ENCODE measurements at regions of chr13 and their contacts with region 1.

Region 1: DNA sequence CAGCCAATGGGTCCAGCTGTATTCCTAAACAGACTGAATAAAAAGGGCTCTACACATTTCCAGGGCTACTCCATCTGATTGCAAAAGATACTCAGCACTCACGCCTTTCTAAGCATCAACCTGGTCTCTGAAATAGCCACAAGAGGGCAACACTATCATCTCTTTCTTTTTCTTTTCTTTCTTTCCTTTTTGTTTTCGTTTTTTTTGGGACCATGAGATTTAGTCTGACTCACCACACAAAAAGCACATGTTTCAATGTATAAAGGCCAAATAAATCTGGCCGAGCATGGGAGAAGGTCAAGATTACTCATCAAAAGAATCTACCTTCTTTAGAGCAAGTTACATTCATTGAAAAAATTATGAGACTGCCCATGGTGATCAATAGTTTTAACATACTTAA is 805.6 kb upstream of the ARGLU1 start:
- DNase-seq: peak; percentile 91
- ATAC-seq: peak; percentile 50
- H3K4me3 ChIP-seq: no peak overlapping the region
- H3K27ac ChIP-seq: peak overlapping the region; percentile 73
- H3K4me1 ChIP-seq: peaks cover 18% of the 10 kb centered on the region
- H3K27me3 ChIP-seq: no peaks in the 10 kb centered on the region
- CTCF ChIP-seq: peak; percentile 84
- POLR2A ChIP-seq: no peak
- RAD21 ChIP-seq: peak; percentile 76

Region 2: GRCh38 chr13:107258599-107259187 is 114.9 kb before region 1 on chr13:
- CTCF ChIA-PET with region 1: no interaction called
- POLR2A ChIA-PET with region 1: interaction called, 4 read pairs
- dilution Hi-C with region 1: no loop called
- in situ Hi-C with region 1: no loop called
- intact Hi-C with region 1: loop called (anchors 2 kb)
- DNase-seq: peak; percentile 95
- ATAC-seq: peak; percentile 85
- H3K4me3 ChIP-seq: no peak overlapping the region
- H3K27ac ChIP-seq: peak overlapping the region; percentile 77
- H3K4me1 ChIP-seq: peaks cover 13% of the 10 kb centered on the region
- H3K27me3 ChIP-seq: no peaks in the 10 kb centered on the region
- CTCF ChIP-seq: no peak
- POLR2A ChIP-seq: no peak
- RAD21 ChIP-seq: no peak; the same call in 1 of the 2 replicates

Region 3: DNA sequence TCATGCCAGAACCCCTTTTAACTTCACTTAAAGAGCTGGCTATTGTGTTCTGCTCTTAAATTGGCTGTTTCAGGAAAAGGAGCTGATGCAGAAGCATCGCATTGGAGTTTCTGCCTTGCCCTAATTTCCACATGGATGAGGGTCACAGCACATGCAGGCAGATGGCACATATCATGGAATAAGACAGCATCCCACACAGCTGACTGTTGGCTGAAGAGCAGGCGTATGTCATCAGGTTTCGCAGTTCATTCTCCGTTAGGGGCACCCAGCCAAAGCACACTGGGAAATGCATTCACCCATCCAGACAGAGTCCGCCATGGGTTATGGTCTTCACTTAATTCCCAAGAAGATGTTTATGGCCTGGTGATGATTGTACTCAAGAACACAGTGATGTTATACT is 269.3 kb after region 1 on chr13:
- CTCF ChIA-PET with region 1: no interaction called
- POLR2A ChIA-PET with region 1: no interaction called
- dilution Hi-C with region 1: no loop called
- in situ Hi-C with region 1: no loop called
- intact Hi-C with region 1: loop called (anchors 2 kb)
- DNase-seq: peak; percentile 55
- ATAC-seq: peak; percentile 64
- H3K4me3 ChIP-seq: no peak overlapping the region
- H3K27ac ChIP-seq: no peak overlapping the region
- H3K4me1 ChIP-seq: peaks cover 5% of the 10 kb centered on the region
- H3K27me3 ChIP-seq: no peaks in the 10 kb centered on the region
- CTCF ChIP-seq: no peak
- POLR2A ChIP-seq: no peak
- RAD21 ChIP-seq: no peak

Region 4: DNA sequence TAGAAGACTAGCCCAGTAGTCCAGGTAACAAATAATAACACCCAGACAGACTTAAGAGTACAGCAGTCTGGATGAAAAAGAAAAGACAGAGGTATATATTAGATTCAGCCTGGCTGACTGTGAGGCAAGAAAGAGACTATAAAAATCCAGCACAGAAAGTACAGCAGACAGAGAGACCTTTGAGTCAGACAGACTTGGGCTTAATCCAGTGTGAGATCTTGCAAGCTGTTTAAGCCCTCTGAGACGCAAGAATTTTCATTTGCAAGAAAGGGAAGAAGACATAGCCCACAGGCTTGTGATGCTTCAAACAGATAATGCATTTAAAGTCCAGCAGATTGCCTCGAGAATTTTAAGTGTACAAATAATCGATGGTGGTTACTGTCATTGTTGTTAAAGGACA is 370.4 kb after region 1 on chr13:
- CTCF ChIA-PET with region 1: no interaction called
- POLR2A ChIA-PET with region 1: no interaction called
- dilution Hi-C with region 1: no loop called
- in situ Hi-C with region 1: no loop called
- intact Hi-C with region 1: loop called (anchors 5 kb)
- DNase-seq: peak; percentile 84
- ATAC-seq: peak; percentile 71
- H3K4me3 ChIP-seq: no peak overlapping the region
- H3K27ac ChIP-seq: no peak overlapping the region
- H3K4me1 ChIP-seq: peaks cover 5% of the 10 kb centered on the region
- H3K27me3 ChIP-seq: no peaks in the 10 kb centered on the region
- CTCF ChIP-seq: no peak
- POLR2A ChIP-seq: no peak
- RAD21 ChIP-seq: no peak

Measured in IMR-90 (cell line).